ENCODE measurements at regions of chr17 and their contacts with region 1.

Region 1: GRCh38 chr17:8057691-8058114 is 18.8 kb downstream of the ALOX15B start:
- H3K4me3 ChIP-seq: no peak overlapping the region
- H3K27ac ChIP-seq: no peak overlapping the region
- H3K4me1 ChIP-seq: peaks cover 5% of the 10 kb centered on the region; the same call in 1 of the 2 replicates
- CTCF ChIP-seq: peak; percentile 73

Region 2: GRCh38 chr17:7261172-7261927 is 796.4 kb before region 1 on chr17:
- CTCF ChIA-PET with region 1: no interaction called
- POLR2A ChIA-PET with region 1: no interaction called
- H3K4me3 ChIP-seq: peak overlapping the region; percentile 40
- H3K27ac ChIP-seq: peak overlapping the region; percentile 41; the same call in 1 of the 2 replicates
- H3K4me1 ChIP-seq: peaks cover 18% of the 10 kb centered on the region
- CTCF ChIP-seq: no peak

Region 3: GRCh38 chr17:7745748-7746470 is 311.8 kb before region 1 on chr17:
- CTCF ChIA-PET with region 1: interaction called, 50 read pairs
- POLR2A ChIA-PET with region 1: interaction called, 3 read pairs
- H3K4me3 ChIP-seq: no peak overlapping the region
- H3K27ac ChIP-seq: no peak overlapping the region
- H3K4me1 ChIP-seq: peaks cover 22% of the 10 kb centered on the region
- CTCF ChIP-seq: no peak

Region 4: GRCh38 chr17:7851438-7852256 is 206.1 kb before region 1 on chr17:
- CTCF ChIA-PET with region 1: no interaction called
- POLR2A ChIA-PET with region 1: no interaction called
- H3K4me3 ChIP-seq: no peak overlapping the region
- H3K27ac ChIP-seq: no peak overlapping the region
- H3K4me1 ChIP-seq: peaks cover 5% of the 10 kb centered on the region; the same call in 1 of the 2 replicates
- CTCF ChIP-seq: peak; percentile 53

Region 5: DNA sequence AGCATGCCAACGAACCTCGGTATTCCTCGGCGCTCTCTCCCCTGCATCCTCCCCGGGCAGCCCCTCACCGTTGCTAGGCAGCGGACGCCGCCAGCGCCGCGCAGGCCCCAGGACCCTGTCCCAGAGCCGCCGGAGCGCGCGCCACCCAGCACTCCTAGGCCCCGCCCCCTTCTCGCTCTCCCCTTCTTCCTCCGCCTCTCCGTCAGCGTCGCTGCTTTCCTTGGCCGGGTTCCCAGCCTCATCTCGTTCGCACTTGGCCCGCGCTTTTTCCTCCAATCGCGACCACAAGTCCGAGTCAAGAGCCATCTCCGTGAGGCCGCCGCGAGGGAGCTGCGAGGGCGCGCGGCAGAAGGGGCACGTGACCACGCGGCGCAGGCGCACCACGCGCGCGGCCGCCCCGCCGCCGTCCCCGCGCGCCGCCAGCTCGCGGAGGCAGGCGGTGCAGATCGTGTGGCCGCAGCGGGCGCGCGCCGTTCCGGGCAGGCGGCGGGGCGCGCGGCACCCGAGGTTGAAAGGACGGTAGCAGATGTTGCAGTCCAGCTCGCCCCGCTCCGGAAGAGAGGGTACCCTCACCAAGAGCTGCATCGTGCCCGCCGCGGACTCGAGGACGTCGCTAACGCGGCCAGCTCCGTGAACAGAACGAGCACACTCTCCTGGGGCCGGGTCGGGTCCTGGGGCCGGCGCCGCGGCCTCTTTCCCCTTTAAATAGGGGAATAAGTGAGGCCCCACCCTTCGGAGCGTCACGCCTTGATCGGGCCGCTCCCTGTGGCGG is 141.9 kb before region 1 on chr17 and contains the start of gene RNF227:
- CTCF ChIA-PET with region 1: interaction called, 32 read pairs
- POLR2A ChIA-PET with region 1: no interaction called
- H3K4me3 ChIP-seq: peak within 1 kb of the TSS; percentile 58
- H3K27ac ChIP-seq: peak within 1 kb of the TSS; percentile 90
- H3K4me1 ChIP-seq: peaks cover 14% of the 10 kb centered on the region
- CTCF ChIP-seq: no peak; the same call in 1 of the 2 replicates

Region 6: GRCh38 chr17:8005960-8006730 is 51.6 kb before region 1 on chr17:
- CTCF ChIA-PET with region 1: interaction called, 10 read pairs
- POLR2A ChIA-PET with region 1: interaction called, 4 read pairs
- H3K4me3 ChIP-seq: no peak overlapping the region
- H3K27ac ChIP-seq: no peak overlapping the region
- H3K4me1 ChIP-seq: no peaks in the 10 kb centered on the region
- CTCF ChIP-seq: no peak

Region 7: GRCh38 chr17:8041249-8041928 is 16.3 kb before region 1 on chr17:
- CTCF ChIA-PET with region 1: interaction called, 65 read pairs
- POLR2A ChIA-PET with region 1: no interaction called
- H3K4me3 ChIP-seq: no peak overlapping the region
- H3K27ac ChIP-seq: no peak overlapping the region
- H3K4me1 ChIP-seq: no peaks in the 10 kb centered on the region
- CTCF ChIP-seq: peak; percentile 64

Region 8: GRCh38 chr17:8091033-8091687 is 33.5 kb after region 1 on chr17:
- CTCF ChIA-PET with region 1: interaction called, 77 read pairs
- POLR2A ChIA-PET with region 1: no interaction called
- H3K4me3 ChIP-seq: no peak overlapping the region
- H3K27ac ChIP-seq: no peak overlapping the region
- H3K4me1 ChIP-seq: no peaks in the 10 kb centered on the region
- CTCF ChIP-seq: no peak

Region 9: DNA sequence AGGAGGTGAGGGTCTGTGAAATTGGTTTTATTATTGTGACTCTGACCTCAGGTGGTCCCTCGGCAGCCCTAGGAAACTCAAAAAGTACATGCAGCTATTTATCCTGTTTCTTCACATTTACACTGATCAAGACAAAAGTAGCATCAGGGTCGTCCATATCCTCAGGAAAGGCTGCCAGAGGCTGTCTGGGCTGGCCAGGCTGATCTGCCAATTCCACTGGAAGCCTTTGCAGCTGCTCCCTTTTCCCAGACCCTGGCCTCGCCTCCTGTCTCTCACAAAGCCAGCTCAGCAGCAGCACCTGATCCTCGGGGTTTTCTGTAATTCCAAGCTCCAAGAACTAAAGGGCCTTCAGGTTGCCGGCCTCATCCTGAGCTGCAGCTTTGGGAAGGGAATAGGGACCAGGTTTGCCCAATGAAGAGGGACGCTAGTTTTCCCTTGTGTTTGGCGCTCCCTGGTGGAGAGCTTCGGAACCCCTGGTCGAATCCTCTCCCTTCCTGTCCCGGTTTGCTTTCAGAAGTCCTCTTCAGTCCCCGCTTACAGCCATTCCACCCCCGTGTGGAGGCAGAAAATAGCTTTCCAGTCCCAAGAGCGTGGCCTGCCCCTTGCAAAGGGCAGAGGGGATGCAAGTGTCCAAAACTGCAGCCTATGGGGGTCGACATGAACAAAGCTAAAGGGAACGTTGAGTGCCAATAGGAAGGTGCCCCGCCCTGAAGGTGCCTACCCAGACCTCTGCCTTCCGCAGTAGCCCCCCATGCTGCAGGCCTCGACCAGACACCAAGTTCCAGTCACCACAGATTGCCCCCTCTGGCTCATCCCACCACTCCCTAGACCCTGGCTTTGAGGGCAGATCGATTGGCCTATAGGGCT is 728.1 kb after region 1 on chr17:
- CTCF ChIA-PET with region 1: interaction called, 15 read pairs
- POLR2A ChIA-PET with region 1: no interaction called
- H3K4me3 ChIP-seq: no peak overlapping the region
- H3K27ac ChIP-seq: no peak overlapping the region
- H3K4me1 ChIP-seq: no peaks in the 10 kb centered on the region
- CTCF ChIP-seq: peak; percentile 75

Measured in HEK293 (cell line).